Sciatic nerve (tissue), 2 donors: ENCODE measurements at regions of chrX and their contacts with region 1.

Region 1: DNA sequence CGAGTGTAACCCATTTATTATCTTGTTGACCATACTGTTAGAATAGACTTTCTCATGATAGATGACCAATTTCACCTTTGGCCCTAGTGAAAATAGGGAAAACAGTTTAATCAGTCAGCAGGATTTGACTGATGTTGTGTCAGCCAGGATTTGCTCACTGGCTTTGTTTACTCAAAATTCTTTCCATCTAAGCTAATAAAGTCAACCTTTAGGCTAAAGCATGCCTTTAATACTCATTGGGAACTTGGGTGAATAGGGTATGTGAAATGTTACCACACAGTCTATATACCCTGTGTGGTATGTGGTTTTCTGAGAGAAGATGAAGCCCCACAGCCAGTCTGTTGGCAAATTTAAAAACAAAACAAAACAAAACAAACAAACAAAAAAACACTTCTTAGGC is 18.7 kb upstream of the SPANXB1 start:
- DNase-seq: no peak
- ATAC-seq: no peak

Region 2: DNA sequence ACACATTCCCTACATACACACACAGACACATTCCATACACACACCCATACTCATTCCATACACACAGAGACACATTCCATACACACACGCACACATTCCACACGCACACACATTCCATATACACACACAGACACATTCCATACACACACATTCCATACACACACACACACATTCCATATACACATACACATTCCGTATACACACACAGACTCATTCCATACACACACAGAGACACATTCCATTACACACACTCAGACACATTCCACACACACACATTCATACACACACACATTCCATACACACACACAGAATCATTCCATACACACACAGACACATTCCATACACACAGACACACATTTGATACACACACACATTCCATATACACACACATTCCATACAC is 259.0 kb before region 1 on chrX:
- intact Hi-C with region 1: loop called (anchors 5 kb)
- DNase-seq: no peak
- ATAC-seq: no peak

Region 3: GRCh38 chrX:141924293-141924692 is 940.6 kb after region 1 on chrX:
- intact Hi-C with region 1: no loop called
- DNase-seq: no peak
- ATAC-seq: no peak